ENCODE measurements at regions of chr15 and their contacts with region 1.

Region 1: GRCh38 chr15:41085029-41085428 is 31.1 kb downstream of the INO80 start:
- H3K4me3 Mint-ChIP-seq: no peak overlapping the region
- H3K27ac Mint-ChIP-seq: no peak overlapping the region
- H3K4me1 Mint-ChIP-seq: no peaks in the 10 kb centered on the region
- H3K27me3 Mint-ChIP-seq: no peaks in the 10 kb centered on the region

Region 2: DNA sequence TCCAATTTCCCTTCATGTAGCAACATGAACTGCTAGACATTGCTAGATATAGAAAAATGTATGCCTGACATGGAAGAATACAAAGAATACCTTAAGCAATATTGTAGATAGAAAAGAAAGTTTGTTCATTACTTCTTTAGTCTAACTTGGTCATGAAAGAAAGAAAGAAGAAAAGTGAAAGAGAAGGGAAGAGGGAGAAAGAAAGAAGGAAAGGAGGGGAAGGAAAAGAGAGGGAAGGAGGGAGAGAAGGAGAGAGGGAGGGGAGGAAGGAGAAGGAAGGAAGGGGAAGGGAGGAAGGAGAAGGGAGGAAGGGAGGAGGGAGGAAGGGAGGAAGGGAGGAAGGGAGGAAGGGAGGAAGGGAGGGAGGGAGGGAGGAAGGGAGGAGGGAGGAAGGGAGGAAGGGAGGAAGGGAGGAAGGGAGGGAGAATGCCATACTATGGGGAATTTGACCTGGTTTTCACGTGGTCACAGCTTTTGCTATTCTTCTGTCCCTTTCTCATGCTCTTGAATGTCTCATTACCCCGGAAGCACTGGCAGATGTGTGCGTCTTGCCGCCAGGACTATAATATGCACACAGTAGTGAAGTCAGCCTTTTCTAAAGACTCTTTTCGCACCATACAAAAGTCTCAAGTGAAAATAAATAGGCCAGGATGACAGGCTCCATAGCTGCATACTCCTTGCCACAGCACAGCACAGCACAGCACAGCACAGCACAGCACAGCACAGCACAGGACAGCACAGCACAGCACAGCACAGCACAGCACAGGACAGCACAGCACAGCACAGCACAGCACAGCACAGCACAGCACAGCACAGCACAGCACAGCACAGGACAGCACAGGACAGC is 53.6 kb before region 1 on chr15:
- intact Hi-C with region 1: no loop called
- H3K4me3 Mint-ChIP-seq: no peak overlapping the region
- H3K27ac Mint-ChIP-seq: peak overlapping the region; percentile 30
- H3K4me1 Mint-ChIP-seq: no peaks in the 10 kb centered on the region
- H3K27me3 Mint-ChIP-seq: no peaks in the 10 kb centered on the region

Region 3: GRCh38 chr15:41180206-41180789 is 95.3 kb after region 1 on chr15:
- intact Hi-C with region 1: loop called (anchors 5 kb)
- H3K4me3 Mint-ChIP-seq: no peak overlapping the region
- H3K27ac Mint-ChIP-seq: no peak overlapping the region
- H3K4me1 Mint-ChIP-seq: peaks cover 5% of the 10 kb centered on the region
- H3K27me3 Mint-ChIP-seq: no peaks in the 10 kb centered on the region

Measured in dendritic cell treated with granulocyte-macrophage colony-stimulating factor and Interleukin-4, amounts not matched to agents 40 ng/mL and 50 ng/mL, for 4 days (primary cell).